AG04449 (cell line): ENCODE measurements at regions of chr5 and their contacts with region 1.

Region 1: DNA sequence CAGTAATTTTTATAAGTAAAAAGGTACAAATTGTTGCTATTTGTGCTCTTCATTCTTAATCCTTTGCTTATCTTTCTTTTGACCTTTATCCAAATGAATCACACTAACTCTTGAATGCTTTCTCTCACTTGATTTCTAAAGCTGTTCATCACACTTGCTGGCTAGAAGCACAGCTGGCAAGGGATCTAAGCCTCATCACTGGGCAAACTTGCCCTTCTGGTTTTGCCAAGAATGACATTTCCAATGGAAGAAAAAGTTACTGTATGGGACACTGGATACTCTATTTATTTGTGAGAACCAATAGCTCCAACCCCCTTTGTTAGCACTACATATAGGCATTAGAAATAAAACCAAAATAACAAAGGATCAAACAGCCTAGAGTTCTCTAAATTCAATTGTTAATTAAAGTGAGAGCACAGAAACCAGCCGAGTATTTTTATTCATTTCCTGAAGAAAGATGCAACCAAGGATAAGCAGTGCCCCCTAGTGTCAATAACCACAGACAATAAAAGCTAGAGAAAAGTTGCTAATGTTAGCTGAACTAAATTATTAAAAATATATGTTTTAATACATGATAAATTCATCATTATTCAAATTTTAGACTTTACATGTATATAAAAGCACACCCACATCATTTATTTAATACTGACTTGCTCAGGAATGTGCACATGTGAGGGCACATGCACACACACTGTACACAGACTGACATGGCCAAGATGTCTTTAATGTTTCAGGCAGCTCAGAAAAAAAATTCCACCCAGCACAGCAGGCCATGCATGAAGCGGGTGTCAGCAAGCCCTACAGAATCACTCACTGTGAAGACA is 59.8 kb upstream of the POU5F2 start:
- DNase-seq: no peak
- H3K4me3 ChIP-seq: no peak overlapping the region
- CTCF ChIP-seq: peak; percentile 47

Region 2: GRCh38 chr5:93599399-93600120 is 201.6 kb before region 1 on chr5:
- CTCF ChIA-PET with region 1: interaction called, 13 read pairs
- POLR2A ChIA-PET with region 1: no interaction called
- DNase-seq: no peak
- H3K4me3 ChIP-seq: no peak overlapping the region
- CTCF ChIP-seq: no peak

Region 3: DNA sequence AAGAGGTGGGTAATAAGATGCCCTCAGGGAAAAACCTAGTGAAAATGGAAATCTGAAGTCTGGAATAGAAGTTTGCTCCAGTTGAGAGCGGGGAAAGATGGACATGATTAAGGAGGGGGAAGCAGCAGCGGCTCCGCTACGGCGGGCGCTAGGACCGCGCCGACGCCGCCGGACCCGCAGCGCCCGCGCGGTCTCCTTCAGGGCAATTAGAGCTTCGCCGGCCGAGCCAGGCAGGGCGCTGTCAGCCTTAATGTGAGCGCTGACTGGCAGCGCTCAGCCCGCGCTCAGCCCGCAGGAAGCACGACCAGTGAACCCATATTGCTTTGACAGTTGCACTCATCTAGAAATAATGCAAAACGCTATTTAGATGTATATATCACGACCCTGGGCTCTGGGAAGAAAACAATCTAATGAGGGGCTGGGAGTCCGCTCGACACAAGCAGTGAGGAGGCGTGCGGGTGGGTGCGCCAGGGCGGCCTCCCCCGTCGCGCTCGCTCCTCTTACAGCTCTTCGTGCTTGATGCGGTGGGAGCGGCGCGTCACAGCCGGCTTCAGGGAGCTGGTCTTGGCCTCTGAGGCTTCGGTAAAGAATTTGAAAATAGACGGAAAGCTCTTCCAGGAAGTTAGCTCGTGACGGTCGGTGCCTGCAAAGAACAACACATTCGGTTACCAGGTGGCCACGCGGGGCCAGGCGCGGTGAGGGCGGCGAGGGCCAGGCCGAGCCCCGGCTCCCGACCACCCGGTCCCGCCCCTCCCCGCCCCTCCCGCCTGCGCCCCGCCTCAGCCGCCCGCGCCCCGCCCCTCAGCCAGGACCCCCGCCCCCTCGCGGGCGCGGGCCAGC is 180.5 kb before region 1 on chr5:
- CTCF ChIA-PET with region 1: interaction called, 11 read pairs
- POLR2A ChIA-PET with region 1: no interaction called
- DNase-seq: no peak
- H3K4me3 ChIP-seq: peak overlapping the region; percentile 68
- CTCF ChIP-seq: peak; percentile 1

Region 4: GRCh38 chr5:93681432-93681831 is 119.8 kb before region 1 on chr5:
- CTCF ChIA-PET with region 1: no interaction called
- POLR2A ChIA-PET with region 1: no interaction called
- DNase-seq: no peak
- H3K4me3 ChIP-seq: no peak overlapping the region
- CTCF ChIP-seq: no peak

Region 5: DNA sequence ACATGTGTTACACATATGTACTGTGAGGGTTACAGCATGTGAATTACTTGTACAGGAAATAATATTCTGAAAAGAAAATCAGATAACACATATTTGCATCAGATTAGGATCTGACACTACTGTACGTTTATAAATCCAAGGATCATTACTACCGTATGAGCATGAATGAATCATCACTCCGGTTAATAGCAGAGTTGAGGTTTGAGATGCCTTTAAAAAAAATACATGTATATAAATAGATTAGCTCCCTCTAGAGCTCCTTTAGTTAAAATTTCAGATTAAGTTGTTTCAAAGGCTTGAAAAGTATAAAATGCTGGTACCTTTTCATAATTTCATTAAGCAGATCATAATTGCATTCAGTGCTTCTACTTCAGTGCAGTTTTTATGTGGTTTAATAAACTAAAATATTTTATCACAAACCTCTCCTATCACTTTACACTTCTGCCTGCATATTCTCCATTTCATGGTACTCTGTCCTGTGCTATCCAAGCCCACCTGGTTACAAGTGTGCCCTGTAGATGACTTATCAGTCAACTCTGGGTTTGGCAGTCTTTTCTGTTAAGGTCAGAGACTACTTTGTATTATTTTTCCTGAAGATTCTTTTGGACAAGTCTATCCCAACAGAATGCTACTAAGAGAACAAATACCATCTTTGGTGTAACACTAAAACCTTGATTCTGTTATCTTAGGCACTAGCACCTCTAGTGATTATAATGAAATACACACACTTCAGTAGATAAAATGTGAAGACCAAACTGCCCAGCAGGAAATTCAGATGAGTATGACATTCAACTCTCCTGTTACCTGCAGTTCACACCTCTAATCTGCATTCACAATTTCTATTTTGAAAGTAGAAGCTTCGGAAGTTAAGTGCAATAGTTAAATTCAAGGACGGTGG is 11.8 kb before region 1 on chr5:
- CTCF ChIA-PET with region 1: interaction called, 41 read pairs
- POLR2A ChIA-PET with region 1: no interaction called
- DNase-seq: peak; percentile 12
- H3K4me3 ChIP-seq: no peak overlapping the region
- CTCF ChIP-seq: no peak

Region 6: DNA sequence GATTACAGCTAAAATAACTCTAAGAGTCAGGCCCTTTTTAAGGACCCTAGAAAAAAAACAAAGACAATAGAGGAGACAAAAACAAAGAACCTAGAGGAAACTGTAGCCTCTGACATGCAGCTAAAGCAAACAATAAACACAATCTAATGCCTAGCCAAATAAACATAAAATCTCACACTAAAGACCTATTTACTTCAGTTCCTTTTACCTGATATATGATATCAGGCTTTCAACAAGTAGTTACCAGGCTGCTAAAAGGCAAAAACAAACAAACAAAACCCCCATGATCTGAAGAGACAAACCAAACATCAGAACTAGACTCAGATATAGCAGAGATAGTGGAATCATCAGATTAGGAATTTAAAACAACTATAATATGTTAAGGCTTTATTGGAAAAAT is 166.7 kb after region 1 on chr5:
- CTCF ChIA-PET with region 1: no interaction called
- POLR2A ChIA-PET with region 1: no interaction called
- DNase-seq: no peak
- H3K4me3 ChIP-seq: no peak overlapping the region
- CTCF ChIP-seq: no peak